ENCODE measurements at regions of chr11 and their contacts with region 1.

Region 1: GRCh38 chr11:123020968-123021367 is 39.3 kb upstream of the BSX start:
- DNase-seq: peak in 2 of 4 experiments; percentile 45 to 46
- ATAC-seq: peak; percentile 86
- H3K4me3 ChIP-seq: no peak overlapping the region
- H3K27ac ChIP-seq: no peak overlapping the region
- H3K4me1 ChIP-seq: peaks cover 0 to 3% of the 10 kb centered on the region in 2 experiments; a peak in 1 of 5 replicates
- H3K27me3 ChIP-seq: peaks cover 9 to 36% of the 10 kb centered on the region in 2 experiments
- CTCF ChIP-seq: peak; percentile 58 to 67 (median 64)
- EP300 ChIP-seq: no peak
- POLR2A ChIP-seq: no peak
- RAD21 ChIP-seq: peak in 1 of 2 experiments; percentile 35; a peak in 2 of 4 replicates

Region 2: DNA sequence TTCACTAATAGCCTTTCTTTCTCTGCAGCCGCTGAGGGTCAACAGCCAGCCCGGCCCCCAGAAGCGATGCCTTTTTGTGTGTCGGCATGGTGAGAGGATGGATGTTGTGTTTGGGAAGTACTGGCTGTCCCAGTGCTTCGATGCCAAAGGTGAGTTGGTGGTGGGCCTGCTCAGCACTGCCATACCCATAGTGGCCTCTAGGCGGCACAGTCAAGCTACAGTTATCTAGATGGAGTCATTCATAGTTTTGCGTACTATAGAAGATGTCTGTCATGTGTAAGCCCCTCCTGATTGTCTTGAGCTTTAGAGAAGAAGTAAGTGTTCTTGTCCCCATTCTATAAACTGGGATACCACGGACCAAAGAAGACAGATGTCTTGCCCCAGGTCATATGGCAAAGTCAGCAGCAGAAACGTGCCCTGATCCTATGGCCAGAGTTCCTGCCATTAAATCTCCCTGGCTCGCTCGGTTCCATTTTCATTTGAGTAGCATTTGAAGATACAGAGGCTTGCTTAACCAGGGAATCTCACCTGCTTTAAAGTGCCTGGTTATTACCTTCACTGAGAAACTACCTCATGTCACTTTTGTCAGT is 224.7 kb before region 1 on chr11:
- CTCF ChIA-PET with region 1: interaction called, 3 read pairs
- POLR2A ChIA-PET with region 1: no interaction called
- in situ Hi-C with region 1: no loop called
- intact Hi-C with region 1: loop called (anchors 5 kb)
- DNase-seq: peak; percentile 37 to 68 (median 52)
- ATAC-seq: peak; percentile 90
- H3K4me3 ChIP-seq: no peak overlapping the region
- H3K27ac ChIP-seq: no peak overlapping the region
- H3K4me1 ChIP-seq: no peaks in the 10 kb centered on the region
- H3K27me3 ChIP-seq: peaks cover 0 to 3% of the 10 kb centered on the region in 2 experiments; a peak in 2 of 5 replicates
- CTCF ChIP-seq: peak; percentile 54 to 80 (median 69)
- EP300 ChIP-seq: no peak
- POLR2A ChIP-seq: no peak
- RAD21 ChIP-seq: no peak; a peak in 1 of 4 replicates

Region 3: DNA sequence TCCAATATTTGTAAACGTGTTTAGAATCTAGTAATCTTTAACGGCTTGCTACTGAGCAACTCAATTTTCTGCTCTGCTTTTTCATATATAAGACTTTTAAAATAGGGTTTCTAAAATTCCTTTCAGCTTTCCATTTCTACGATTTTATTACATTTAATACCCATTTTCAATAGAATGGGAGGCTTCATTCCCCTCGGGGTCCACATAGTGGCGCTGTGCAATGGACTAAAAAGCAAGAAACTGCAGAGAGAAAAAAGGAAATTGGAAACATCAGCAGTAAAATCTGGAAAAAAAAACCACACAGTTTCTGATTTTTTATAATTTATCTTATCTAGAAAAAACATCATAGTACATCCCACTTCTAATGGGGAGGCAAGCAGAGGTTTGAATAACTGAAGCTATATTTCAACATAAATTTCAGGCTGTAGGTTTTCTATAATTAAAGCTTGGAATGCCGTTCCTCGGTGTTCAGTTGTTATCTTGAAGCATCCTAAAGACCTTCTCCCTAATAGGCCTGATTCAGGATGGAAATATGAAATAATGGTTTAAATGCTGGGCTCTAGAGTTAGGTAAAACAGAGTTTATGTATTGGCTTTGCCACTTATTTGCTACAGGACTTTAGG is 157.2 kb before region 1 on chr11:
- CTCF ChIA-PET with region 1: interaction called, 3 read pairs
- POLR2A ChIA-PET with region 1: no interaction called
- in situ Hi-C with region 1: no loop called
- intact Hi-C with region 1: loop called (anchors 1 kb)
- DNase-seq: peak; percentile 30 to 42 (median 36)
- ATAC-seq: peak; percentile 67; the same call in 2 of the 3 replicates
- H3K4me3 ChIP-seq: no peak overlapping the region
- H3K27ac ChIP-seq: no peak overlapping the region
- H3K4me1 ChIP-seq: no peaks in the 10 kb centered on the region
- H3K27me3 ChIP-seq: no peaks in the 10 kb centered on the region; a peak in 1 of 5 replicates
- CTCF ChIP-seq: peak; percentile 59 to 77 (median 62); a peak in 5 of 6 replicates
- EP300 ChIP-seq: no peak
- POLR2A ChIP-seq: no peak
- RAD21 ChIP-seq: peak; percentile 58 to 60

Region 4: DNA sequence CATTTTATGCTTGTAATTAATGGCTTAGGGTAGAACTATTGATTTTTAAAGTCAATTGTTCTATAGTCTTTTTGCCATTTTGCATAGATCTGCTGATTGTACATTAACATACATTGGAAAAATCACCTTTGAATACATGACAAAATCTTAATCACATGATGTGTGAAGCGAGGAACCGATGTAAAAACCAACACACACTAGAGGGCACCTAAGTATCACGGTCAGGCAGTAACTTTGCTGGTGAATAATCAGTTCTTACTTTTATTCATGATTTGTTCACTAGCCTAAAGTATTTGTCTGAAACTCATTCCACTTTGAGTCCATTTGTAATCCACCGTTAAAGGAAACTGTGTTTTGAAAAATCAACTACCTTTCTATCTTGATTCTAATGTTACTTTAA is 110.2 kb before region 1 on chr11:
- CTCF ChIA-PET with region 1: interaction called, 5 read pairs
- POLR2A ChIA-PET with region 1: no interaction called
- in situ Hi-C with region 1: no loop called
- intact Hi-C with region 1: loop called (anchors 1 kb)
- DNase-seq: peak in 1 of 4 experiments; percentile 6
- ATAC-seq: no peak
- H3K4me3 ChIP-seq: no peak overlapping the region
- H3K27ac ChIP-seq: no peak overlapping the region
- H3K4me1 ChIP-seq: no peaks in the 10 kb centered on the region
- H3K27me3 ChIP-seq: peaks cover 0 to 4% of the 10 kb centered on the region in 2 experiments; a peak in 3 of 5 replicates
- CTCF ChIP-seq: peak in 1 of 3 experiments; percentile 43; a peak in 2 of 6 replicates
- EP300 ChIP-seq: no peak
- POLR2A ChIP-seq: no peak
- RAD21 ChIP-seq: peak in 1 of 2 experiments; percentile 47; a peak in 2 of 4 replicates

Region 5: DNA sequence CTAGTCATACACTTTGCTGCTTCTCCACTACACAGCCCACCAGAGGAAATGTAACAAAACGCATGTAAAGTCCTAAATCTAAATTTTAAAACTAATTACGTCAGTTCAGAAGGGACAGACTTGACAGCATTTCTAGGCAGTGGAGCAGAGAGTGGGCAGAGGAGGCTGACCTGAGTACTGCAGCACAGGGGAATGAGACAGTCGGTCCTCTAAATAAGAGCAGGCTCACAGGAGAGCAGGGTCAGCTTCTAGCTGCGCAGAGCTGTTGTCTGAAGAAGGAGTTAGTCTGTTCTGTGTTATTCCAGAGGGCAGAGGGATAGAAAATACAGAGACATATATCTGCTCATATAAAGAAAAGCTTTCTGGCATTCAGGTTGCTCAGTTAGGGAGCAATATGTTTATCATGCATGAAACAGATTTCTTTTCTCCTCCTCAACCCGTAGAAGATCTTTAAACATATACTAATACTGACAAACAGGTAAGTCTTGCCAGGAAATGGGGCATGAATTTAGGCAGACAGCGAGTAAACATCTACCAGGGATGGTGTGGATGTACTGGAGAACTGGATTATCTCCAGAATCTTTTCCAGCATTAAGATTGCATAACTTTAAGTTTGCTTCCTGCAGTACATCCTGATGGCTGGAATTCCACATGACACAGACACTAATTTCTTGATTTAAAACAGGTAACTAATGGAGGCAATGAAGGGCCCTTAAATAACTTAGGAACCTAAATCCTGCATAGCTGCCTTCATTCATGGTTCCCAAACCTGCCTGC is 97.9 kb before region 1 on chr11:
- CTCF ChIA-PET with region 1: no interaction called
- POLR2A ChIA-PET with region 1: no interaction called
- in situ Hi-C with region 1: no loop called
- intact Hi-C with region 1: no loop called
- DNase-seq: no peak
- ATAC-seq: no peak
- H3K4me3 ChIP-seq: no peak overlapping the region
- H3K27ac ChIP-seq: no peak overlapping the region
- H3K4me1 ChIP-seq: no peaks in the 10 kb centered on the region
- H3K27me3 ChIP-seq: peaks cover 3 to 8% of the 10 kb centered on the region in 2 experiments; a peak in 3 of 5 replicates
- CTCF ChIP-seq: no peak
- EP300 ChIP-seq: no peak
- POLR2A ChIP-seq: no peak
- RAD21 ChIP-seq: no peak

Region 6: GRCh38 chr11:123264431-123264780 is 243.4 kb after region 1 on chr11:
- CTCF ChIA-PET with region 1: no interaction called
- POLR2A ChIA-PET with region 1: no interaction called
- in situ Hi-C with region 1: no loop called
- intact Hi-C with region 1: no loop called
- DNase-seq: no peak
- ATAC-seq: no peak
- H3K4me3 ChIP-seq: no peak overlapping the region
- H3K27ac ChIP-seq: no peak overlapping the region
- H3K4me1 ChIP-seq: no peaks in the 10 kb centered on the region
- H3K27me3 ChIP-seq: peaks cover 0 to 25% of the 10 kb centered on the region in 2 experiments; a peak in 2 of 5 replicates
- CTCF ChIP-seq: no peak
- EP300 ChIP-seq: no peak
- POLR2A ChIP-seq: no peak
- RAD21 ChIP-seq: no peak